Lower leg skin (tissue), 4 donors: ENCODE measurements at regions of chr14 and their contacts with region 1.

Region 1: GRCh38 chr14:30214461-30215090 is 286.9 kb upstream of the PRKD1 start:
- DNase-seq: no peak
- H3K4me3 ChIP-seq: no peak overlapping the region
- CTCF ChIP-seq: peak in 1 of 3 donors; percentile 32
- POLR2A ChIP-seq: no peak

Region 2: DNA sequence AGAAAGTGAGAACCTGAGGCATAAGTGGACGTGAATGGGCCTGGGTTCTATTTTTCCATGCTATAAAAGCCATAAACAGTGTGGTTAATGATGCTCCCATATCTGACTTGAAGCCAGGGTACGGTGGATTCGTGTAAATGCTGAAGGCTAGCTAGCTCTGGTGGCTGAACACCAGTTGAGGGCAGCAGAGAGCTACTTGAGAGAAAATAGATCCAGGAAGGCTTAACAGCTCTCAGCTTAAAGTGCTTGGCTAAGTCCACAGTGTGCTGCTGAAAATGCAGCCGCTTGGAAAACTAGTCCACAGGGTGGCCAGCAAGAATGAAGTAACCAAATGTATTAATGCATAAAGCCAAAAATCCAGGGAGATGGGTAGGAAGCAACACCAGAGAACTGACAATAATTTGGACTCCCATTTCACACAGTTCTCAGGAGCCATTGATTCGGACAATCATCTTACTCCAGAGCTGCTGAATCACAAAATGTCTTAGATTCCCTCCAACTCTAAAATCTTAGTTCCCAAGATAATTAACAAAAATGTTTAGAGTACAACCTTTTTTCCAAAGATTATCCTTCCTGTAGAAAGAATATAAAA is 1463.0 kb before region 1 on chr14:
- intact Hi-C with region 1: loop called (anchors 5 kb)
- DNase-seq: no peak
- H3K4me3 ChIP-seq: no peak overlapping the region
- CTCF ChIP-seq: no peak
- POLR2A ChIP-seq: no peak

Region 3: GRCh38 chr14:29548948-29549370 is 665.6 kb before region 1 on chr14:
- intact Hi-C with region 1: loop called (anchors 5 kb)
- DNase-seq: no peak
- H3K4me3 ChIP-seq: no peak overlapping the region
- CTCF ChIP-seq: no peak
- POLR2A ChIP-seq: no peak

Region 4: GRCh38 chr14:30180219-30180618 is 34.4 kb before region 1 on chr14:
- intact Hi-C with region 1: no loop called
- DNase-seq: no peak
- H3K4me3 ChIP-seq: no peak overlapping the region
- CTCF ChIP-seq: no peak
- POLR2A ChIP-seq: no peak